ENCODE measurements at regions of chr7 and their contacts with region 1.

Region 1: DNA sequence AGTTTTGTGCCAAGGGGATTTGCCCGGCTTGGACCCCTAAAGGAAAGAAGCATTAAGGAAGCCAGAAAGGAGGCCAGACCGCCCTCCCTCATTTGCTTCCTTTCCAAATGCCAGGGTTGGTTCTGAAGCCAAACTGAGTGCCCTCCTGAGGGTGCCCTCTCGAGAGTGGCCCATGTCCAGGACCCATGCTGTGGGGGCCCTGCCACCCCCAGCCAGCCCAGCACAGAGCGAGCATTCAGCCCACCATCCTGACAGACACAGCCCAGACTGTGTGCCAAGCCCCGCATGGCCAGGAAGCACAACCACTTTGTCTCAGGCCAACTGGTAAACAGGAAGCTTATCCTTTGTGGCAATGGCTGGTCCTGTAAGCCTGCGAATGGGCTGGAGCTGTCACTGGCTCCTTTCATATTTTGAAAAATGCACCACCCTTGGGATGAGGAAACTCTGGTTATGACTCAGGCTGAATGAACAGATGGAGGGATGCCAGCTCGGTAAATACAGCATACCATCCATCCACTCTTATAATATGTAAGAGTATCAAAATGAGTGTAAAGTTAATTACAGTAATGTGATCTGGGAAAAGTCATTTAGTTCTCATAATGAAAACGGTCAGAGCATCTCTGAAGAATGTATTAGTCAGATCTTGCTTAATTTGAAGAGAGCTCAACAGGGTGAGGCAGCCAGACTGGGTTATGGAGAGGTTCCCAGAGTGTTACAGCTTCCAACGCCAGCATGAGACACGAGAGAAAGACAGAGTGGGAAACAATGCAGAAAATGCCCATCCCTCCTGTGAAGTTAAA is 65.0 kb downstream of the STK17A start:
- DNase-seq: peak; percentile 80
- H3K4me3 Mint-ChIP-seq: peak overlapping the region; percentile 80
- H3K27ac Mint-ChIP-seq: peak overlapping the region; percentile 99
- H3K4me1 Mint-ChIP-seq: peaks cover 93% of the 10 kb centered on the region
- H3K27me3 Mint-ChIP-seq: no peaks in the 10 kb centered on the region

Region 2: DNA sequence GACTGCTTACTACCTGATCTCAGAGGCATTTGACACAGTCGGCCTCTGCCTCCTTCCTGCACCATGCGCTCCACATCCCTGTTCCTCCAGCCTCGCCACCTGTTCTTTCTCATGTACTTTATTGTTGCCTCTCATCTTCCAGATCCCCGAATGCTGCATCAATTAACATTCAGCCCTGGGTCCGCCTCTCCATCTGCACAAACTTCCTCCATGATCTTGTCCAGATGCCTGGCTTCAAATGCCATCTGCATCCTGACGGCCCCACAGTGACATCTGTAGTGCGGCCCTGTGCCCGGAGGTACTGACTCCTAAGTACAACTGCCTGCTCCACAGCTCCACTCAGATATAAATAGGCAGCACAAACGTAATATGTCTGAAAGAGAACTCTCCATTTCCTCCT is 116.2 kb before region 1 on chr7:
- CTCF ChIA-PET with region 1: no interaction called
- POLR2A ChIA-PET with region 1: no interaction called
- intact Hi-C with region 1: no loop called
- DNase-seq: no peak
- H3K4me3 Mint-ChIP-seq: no peak overlapping the region
- H3K27ac Mint-ChIP-seq: no peak overlapping the region
- H3K4me1 Mint-ChIP-seq: no peaks in the 10 kb centered on the region
- H3K27me3 Mint-ChIP-seq: peaks cover 3% of the 10 kb centered on the region

Region 3: DNA sequence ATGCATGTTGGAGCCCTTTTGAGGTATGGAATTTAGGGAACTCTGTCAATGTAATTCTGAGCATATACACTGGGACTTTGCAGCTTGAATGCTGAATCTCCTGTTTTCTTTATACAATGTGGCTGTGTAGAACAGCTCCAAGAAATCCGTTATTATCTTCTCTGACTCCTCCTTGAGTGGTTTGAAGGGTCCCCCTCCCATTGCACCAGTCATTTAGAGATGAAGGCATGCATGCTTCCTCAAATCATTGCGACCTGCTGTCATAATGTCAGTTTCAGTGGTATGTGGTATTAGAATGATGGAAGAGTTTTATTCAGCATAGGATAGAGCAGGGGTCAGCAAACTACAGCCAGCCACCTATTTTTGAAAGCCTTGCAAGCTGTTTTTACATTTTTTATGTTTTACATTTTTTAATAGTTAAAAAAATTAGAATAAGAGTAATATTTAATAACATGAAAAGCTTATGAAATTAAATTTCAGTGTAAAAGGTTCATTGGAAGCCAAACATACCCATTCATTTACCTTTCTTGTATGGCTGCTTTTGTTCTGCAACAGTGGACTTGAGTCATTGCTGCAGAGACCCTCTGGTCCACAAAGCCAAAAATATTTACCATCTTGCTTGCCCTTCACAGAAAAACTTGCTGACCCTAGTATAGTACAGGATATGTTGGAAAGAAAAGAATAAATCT is 56.9 kb before region 1 on chr7:
- CTCF ChIA-PET with region 1: interaction called, 130 read pairs
- POLR2A ChIA-PET with region 1: interaction called, 90 read pairs
- intact Hi-C with region 1: loop called (anchors 1 kb)
- DNase-seq: peak; percentile 68
- H3K4me3 Mint-ChIP-seq: peak overlapping the region; percentile 28
- H3K27ac Mint-ChIP-seq: peak overlapping the region; percentile 75
- H3K4me1 Mint-ChIP-seq: peaks cover 83% of the 10 kb centered on the region
- H3K27me3 Mint-ChIP-seq: no peaks in the 10 kb centered on the region

Region 4: DNA sequence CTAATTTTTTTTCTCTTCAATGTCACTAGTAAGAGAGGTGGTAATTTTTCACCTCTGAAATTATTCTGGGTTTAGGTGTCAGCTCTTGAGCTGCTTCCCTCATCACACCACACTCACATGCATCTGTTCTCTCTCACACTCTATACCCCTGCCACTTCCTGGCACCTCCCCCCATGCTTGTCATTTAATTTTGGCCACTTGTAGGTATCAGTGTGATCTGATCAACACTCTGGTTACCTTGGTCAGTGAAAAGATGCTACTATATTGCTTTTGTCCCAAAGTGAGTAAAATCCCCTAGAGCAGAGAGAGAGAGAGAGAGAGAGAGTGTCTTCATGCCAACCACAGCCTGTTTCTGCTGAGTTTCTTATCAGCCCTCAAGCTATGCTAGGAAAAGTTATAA is 22.4 kb before region 1 on chr7:
- CTCF ChIA-PET with region 1: interaction called, 6 read pairs
- POLR2A ChIA-PET with region 1: interaction called, 16 read pairs
- intact Hi-C with region 1: loop called (anchors 1 kb)
- DNase-seq: peak; percentile 67
- H3K4me3 Mint-ChIP-seq: no peak overlapping the region
- H3K27ac Mint-ChIP-seq: peak overlapping the region; percentile 54
- H3K4me1 Mint-ChIP-seq: peaks cover 84% of the 10 kb centered on the region
- H3K27me3 Mint-ChIP-seq: no peaks in the 10 kb centered on the region

Region 5: GRCh38 chr7:43669286-43670081 is 21.6 kb after region 1 on chr7:
- CTCF ChIA-PET with region 1: interaction called, 8 read pairs
- POLR2A ChIA-PET with region 1: interaction called, 26 read pairs
- intact Hi-C with region 1: loop called (anchors 1 kb)
- DNase-seq: peak; percentile 96
- H3K4me3 Mint-ChIP-seq: peak overlapping the region; percentile 78
- H3K27ac Mint-ChIP-seq: peak overlapping the region; percentile 96
- H3K4me1 Mint-ChIP-seq: peaks cover 78% of the 10 kb centered on the region
- H3K27me3 Mint-ChIP-seq: no peaks in the 10 kb centered on the region

Region 6: GRCh38 chr7:43700059-43700501 is 52.2 kb after region 1 on chr7:
- CTCF ChIA-PET with region 1: interaction called, 108 read pairs
- POLR2A ChIA-PET with region 1: interaction called, 16 read pairs
- intact Hi-C with region 1: loop called (anchors 1 kb)
- DNase-seq: no peak
- H3K4me3 Mint-ChIP-seq: no peak overlapping the region
- H3K27ac Mint-ChIP-seq: no peak overlapping the region
- H3K4me1 Mint-ChIP-seq: peaks cover 57% of the 10 kb centered on the region
- H3K27me3 Mint-ChIP-seq: no peaks in the 10 kb centered on the region

Region 7: GRCh38 chr7:43799589-43799988 is 151.7 kb after region 1 on chr7:
- CTCF ChIA-PET with region 1: no interaction called
- POLR2A ChIA-PET with region 1: no interaction called
- intact Hi-C with region 1: no loop called
- DNase-seq: no peak
- H3K4me3 Mint-ChIP-seq: no peak overlapping the region
- H3K27ac Mint-ChIP-seq: no peak overlapping the region
- H3K4me1 Mint-ChIP-seq: no peaks in the 10 kb centered on the region
- H3K27me3 Mint-ChIP-seq: no peaks in the 10 kb centered on the region

Region 8: GRCh38 chr7:43834463-43835251 is 186.8 kb after region 1 on chr7:
- CTCF ChIA-PET with region 1: interaction called, 6 read pairs
- POLR2A ChIA-PET with region 1: no interaction called
- intact Hi-C with region 1: loop called (anchors 1 kb)
- DNase-seq: peak; percentile 64
- H3K4me3 Mint-ChIP-seq: peak overlapping the region; percentile 77
- H3K27ac Mint-ChIP-seq: peak overlapping the region; percentile 65
- H3K4me1 Mint-ChIP-seq: peaks cover 31% of the 10 kb centered on the region
- H3K27me3 Mint-ChIP-seq: no peaks in the 10 kb centered on the region

Measured in activated CD4-positive, alpha-beta memory T cell treated with anti-CD3 and anti-CD28 coated beads for 36 hours (primary cell).